Astrocyte of the cerebellum (primary cell): ENCODE measurements at regions of chr5 and their contacts with region 1.

Region 1: DNA sequence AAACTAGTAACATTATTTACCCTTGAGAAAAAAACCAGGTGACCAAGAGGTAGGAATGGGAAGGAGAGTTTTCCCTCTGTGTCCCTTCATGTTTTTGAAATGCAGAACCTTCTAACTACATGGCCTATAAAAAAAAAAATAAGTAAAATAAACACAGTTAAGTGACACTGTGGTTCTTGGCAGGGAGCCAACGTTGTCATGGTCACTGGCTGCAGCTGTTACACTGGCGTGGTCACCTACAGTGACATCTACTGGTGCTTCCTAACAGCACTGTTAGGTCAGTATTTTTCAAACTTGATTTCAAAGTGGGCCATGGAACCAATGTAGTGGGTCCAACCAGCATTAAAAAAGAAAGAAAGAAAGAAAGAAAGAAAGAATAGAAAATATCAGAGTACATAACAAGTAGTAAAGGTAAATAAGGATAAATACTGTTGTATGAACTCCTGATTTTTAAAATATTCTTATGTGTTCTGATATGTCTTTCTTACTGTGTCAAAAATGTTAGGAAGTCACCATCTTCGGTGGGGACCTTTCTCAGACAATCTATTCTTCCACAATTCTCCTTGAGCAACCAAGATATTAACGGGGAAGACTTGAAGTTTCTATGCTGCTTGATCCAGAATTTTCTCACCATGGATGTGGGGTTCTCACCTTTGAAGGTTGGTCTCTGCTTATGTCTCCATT is 59.1 kb upstream of the PJA2 start:
- DNase-seq: peak; percentile 90
- H3K4me3 ChIP-seq: no peak overlapping the region
- CTCF ChIP-seq: peak; percentile 76

Region 2: DNA sequence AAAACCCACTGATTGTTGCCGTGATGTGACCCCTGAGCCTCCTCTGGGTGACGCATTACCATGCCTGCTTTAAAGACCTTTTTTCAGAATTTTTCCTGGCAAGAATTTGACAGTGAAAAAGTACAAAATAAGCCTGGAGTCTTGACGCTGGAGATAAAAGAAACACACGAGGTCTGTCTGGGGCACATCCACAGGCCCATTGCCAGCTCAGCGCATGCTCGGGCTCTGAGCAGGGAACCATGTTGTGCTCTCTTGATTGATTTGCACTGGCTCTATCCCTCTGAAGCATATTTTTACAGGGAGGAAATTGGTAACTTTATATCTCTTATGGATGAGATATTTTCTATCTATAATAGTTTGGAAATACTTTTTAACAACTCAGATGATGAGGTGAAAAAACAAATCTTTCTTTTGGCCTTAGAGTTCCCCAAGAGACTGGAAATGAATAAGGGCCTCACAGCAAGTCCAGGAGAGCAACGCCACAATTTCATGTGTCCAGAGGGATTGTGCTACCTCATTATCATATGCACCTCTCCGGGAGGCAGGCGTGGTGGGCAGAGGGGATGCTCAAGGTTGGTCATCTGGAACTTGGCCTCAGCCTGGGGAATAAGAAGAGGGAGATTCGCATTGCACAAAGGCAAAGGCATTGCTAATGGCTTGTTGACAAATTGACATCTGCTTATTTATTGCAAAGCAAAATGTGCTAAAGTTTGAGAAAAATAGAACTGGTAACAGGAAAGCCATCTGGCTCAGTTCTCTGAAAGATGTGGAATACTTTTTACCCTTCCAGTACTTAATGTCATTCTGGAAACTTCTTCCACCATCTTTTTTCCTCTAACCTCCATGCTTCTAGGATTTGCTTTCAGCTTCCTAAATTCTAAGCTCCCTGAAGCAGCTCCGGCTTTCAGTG is 242.9 kb before region 1 on chr5:
- in situ Hi-C with region 1: no loop called
- DNase-seq: no peak
- H3K4me3 ChIP-seq: no peak overlapping the region
- CTCF ChIP-seq: no peak

Region 3: GRCh38 chr5:109365653-109366052 is 103.2 kb before region 1 on chr5:
- in situ Hi-C with region 1: loop called (anchors 5 kb)
- DNase-seq: no peak
- H3K4me3 ChIP-seq: no peak overlapping the region
- CTCF ChIP-seq: no peak

Region 4: DNA sequence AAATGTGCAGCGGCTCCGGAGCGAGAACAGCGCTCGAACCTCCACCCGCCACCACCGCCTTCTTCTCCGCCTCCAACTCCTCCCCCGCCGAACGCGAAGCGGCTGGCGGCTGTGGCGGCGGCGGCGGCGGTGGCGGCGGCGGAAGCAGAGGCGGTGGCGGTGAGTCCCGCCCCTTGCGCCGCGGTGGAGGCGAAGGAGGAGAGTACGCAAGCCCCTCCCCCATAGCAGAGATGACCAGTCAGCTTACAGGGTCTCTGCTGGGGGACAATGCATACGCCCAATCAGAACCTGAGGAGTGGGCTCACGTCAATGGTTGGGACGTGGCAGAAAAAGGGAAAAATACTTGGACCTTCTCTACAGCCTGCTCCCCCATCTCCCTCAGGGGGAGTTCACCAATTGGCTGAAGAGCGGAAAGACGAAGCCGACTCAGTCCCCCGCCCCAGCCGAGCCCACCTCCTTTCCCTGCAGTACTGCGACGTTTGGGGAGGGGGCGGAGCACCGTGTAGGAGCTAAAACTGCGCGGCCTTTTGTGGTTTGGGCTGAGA is 59.0 kb before region 1 on chr5 and contains the start of gene PJA2:
- in situ Hi-C with region 1: loop called (anchors 5 kb)
- DNase-seq: peak; percentile 100
- H3K4me3 ChIP-seq: peak within 1 kb of the TSS; percentile 67
- CTCF ChIP-seq: peak; percentile 33